Heart right ventricle (tissue), 16 donors: ENCODE measurements at regions of chr11 and their contacts with region 1.

Region 1: GRCh38 chr11:118051611-118052461 is 25.0 kb upstream of the TMPRSS4 start:
- DNase-seq: no peak
- ATAC-seq: peak in 5 of 8 donors; percentile 12 to 34 (median 24)
- H3K4me3 ChIP-seq: no peak overlapping the region
- H3K27ac ChIP-seq: peak overlapping the region in 1 of 10 donors; percentile 75
- H3K4me1 ChIP-seq: peaks cover 0 to 30% (median 0%) of the 10 kb centered on the region in 9 donors
- H3K27me3 ChIP-seq: no peaks in the 10 kb centered on the region
- CTCF ChIP-seq: no peak

Region 2: DNA sequence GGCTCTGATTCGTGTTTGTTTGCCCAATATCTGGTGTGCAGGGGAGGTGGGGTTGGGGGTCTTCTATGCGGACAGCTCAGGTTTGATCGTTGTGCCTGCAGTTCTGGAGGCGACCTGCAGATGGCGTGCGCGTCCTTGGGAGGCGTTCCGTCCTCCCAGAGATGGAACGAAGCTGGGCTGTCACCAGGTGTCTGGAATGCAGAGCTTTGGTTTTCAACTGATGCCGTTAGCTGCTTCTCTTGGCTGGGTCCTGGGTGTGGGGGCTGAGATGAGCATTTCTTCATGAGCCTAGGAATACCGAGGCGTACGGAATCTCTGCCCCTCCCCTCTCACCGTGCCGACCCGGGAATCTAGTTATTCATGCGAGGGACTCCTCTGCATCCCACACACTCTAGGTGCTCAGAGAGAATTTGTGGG is 625.6 kb before region 1 on chr11:
- intact Hi-C with region 1: loop called in 8 of 10 experiments (anchors 5 to 10 kb)
- DNase-seq: peak; percentile 51 to 76
- ATAC-seq: peak; percentile 27 to 74 (median 68)
- H3K4me3 ChIP-seq: no peak overlapping the region
- H3K27ac ChIP-seq: no peak overlapping the region
- H3K4me1 ChIP-seq: peaks cover 0 to 7% (median 0%) of the 10 kb centered on the region in 9 donors
- H3K27me3 ChIP-seq: peaks cover 0 to 4% (median 0%) of the 10 kb centered on the region in 7 donors
- CTCF ChIP-seq: peak; percentile 82 to 97 (median 95)

Region 3: GRCh38 chr11:117807482-117808327 is 244.1 kb before region 1 on chr11:
- intact Hi-C with region 1: loop called in 6 of 10 experiments (anchors 1 to 5 kb)
- DNase-seq: peak; percentile 80 to 82
- ATAC-seq: peak in 6 of 8 donors; percentile 38 to 75 (median 53)
- H3K4me3 ChIP-seq: no peak overlapping the region
- H3K27ac ChIP-seq: no peak overlapping the region
- H3K4me1 ChIP-seq: peaks cover 0 to 23% (median 8%) of the 10 kb centered on the region in 9 donors
- H3K27me3 ChIP-seq: peaks cover 0 to 3% (median 0%) of the 10 kb centered on the region in 7 donors
- CTCF ChIP-seq: peak; percentile 72 to 95 (median 92)

Region 4: DNA sequence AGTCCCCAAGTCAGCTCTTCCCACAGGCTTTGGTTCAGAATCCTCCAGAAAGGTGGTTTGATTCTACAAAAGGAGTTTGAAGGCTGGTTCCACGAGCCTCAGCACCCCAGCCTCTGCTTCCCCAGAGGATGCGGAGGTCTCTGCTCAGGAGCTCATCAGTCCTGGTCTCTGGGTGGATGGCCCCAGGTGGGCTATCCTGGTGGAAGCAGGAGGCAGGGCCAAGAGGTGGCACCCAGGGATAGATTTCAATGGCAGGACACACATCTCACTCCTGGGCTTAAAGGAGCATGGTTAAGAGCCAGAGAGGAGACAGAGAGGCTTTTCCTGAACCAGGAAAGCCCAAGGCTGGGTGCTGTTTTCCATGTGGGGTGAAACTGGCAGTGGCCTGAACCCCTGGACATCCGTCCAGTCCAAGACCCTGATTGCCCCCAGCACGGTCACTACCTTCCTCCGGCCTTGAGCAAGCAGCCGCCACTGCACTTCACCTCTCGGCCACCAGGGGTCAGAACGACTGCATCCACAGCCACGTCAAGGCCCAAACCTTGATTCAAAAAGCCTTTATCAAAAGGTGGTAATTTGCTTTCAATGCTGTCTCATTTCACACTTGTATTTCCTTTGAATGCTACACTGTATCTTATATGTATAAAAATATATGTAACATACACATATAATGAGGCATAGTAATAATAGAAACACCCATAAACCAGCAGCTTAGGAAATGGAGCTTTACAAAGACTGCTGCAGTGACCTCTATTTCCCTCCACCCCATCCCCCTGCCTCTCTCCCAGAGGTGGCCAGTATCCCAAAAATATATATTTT is 208.0 kb before region 1 on chr11:
- intact Hi-C with region 1: loop called in 9 of 10 experiments (anchors 1 to 10 kb)
- DNase-seq: peak; percentile 84 to 88
- ATAC-seq: peak; percentile 59 to 84 (median 76)
- H3K4me3 ChIP-seq: no peak overlapping the region
- H3K27ac ChIP-seq: peak overlapping the region in 3 of 10 donors; percentile 21 to 44 (median 30)
- H3K4me1 ChIP-seq: peaks cover 0 to 36% (median 24%) of the 10 kb centered on the region in 9 donors
- H3K27me3 ChIP-seq: no peaks in the 10 kb centered on the region
- CTCF ChIP-seq: peak; percentile 97 to 100 (median 99)

Region 5: DNA sequence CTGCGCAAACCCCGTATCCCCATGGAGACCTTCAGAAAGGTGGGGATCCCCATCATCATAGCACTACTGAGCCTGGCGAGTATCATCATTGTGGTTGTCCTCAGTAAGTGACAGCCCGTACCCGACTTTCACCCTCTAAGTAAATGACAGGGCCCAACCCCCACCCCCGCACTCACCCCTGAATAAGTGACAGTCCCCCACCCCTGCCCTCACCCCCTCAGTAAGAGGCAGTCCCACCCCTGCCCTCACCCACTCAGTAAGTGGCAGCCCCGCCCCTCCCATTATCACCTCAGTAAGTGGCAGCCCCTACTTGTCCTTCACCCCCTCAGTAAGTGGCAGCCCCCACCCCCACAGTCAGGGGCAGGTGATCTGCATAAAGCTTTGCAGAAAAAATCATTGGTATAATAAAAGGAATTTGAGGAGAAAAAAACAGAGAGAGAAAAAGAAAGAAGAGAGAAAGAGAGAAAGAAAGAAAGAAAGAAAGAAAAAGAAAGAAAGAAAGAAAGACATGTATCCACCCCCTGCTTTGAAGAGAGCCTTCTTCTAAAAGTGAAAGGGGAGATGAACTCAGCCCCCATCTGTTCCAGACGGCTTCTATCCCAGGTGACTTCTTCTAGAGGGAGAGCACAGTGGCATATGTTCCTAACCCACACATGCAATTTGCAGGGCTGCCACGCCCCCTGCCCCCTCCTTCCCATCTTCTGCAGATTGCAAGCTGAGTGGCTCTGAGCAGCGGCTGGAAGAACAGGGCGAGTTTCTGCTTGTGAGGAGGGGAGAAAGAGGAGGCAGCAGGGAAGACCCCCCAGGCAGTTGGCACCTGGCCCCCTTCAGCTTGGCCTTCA is 47.4 kb after region 1 on chr11:
- intact Hi-C with region 1: no loop called
- DNase-seq: no peak
- ATAC-seq: peak in 4 of 8 donors; percentile 15 to 44 (median 38)
- H3K4me3 ChIP-seq: no peak overlapping the region
- H3K27ac ChIP-seq: peak overlapping the region in 9 of 10 donors; percentile 1 to 83 (median 68)
- H3K4me1 ChIP-seq: peaks cover 0 to 20% (median 12%) of the 10 kb centered on the region in 9 donors
- H3K27me3 ChIP-seq: no peaks in the 10 kb centered on the region
- CTCF ChIP-seq: no peak